Head of caudate nucleus (tissue), 42 donors: ENCODE measurements at regions of chr7 and their contacts with region 1.

Region 1: DNA sequence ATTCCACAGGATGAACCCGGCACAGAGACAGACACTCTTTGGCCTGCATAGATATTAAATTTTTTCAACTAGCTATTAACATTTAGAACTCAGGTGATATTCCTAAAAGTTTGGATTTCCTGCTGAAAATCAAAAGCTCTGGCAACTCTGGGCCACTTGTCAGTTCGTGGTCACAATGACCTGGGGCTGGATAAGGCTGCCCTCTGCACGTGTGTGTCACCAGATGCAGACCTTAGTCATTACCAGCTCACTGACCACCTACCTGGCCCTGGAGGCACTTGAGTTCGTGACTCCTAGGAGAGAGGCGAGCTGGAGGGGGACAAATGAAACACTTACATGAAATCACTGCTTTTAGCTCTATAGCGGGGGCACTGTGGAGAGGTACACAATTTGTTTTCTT is 126.5 kb downstream of the HIPK2 start:
- DNase-seq: no peak

Region 2: GRCh38 chr7:139731802-139732470 is 80.6 kb after region 1 on chr7:
- intact Hi-C with region 1: loop called (anchors 10 kb)
- DNase-seq: peak in 40 of 42 donors; percentile 53 to 90 (median 71)